ENCODE measurements at regions of chr2 and their contacts with region 1.

Region 1: GRCh38 chr2:237196866-237197618 is 111.4 kb downstream of the COPS8 start:
- DNase-seq: no peak
- H3K4me3 ChIP-seq: no peak overlapping the region
- CTCF ChIP-seq: no peak

Region 2: GRCh38 chr2:236904389-236905280 is 292.4 kb before region 1 on chr2:
- CTCF ChIA-PET with region 1: no interaction called
- POLR2A ChIA-PET with region 1: no interaction called
- DNase-seq: no peak
- H3K4me3 ChIP-seq: no peak overlapping the region
- CTCF ChIP-seq: no peak

Region 3: DNA sequence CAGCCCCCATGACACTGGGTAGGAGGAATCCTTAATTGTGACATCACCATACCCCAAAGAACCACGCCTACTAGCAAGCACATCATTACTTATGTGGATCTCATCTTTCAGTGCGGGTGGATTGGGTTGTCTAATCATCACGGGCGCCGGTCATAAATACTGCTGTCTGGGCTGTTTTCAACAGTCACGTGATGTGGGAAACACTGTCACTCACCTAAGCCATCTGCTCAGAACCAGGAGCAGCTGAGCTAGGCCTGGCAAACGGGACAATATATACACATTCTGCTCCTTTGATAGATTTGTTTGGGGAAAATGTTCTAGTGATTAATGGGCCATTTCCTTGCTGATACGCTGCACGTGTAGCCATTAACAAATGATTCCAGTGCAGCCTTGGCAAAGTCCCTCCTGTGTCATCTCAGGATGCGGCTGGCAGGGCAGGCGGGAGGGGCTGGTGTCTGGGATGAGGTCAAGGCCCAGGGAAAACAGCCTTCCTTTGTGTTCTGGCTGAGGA is 257.3 kb before region 1 on chr2:
- CTCF ChIA-PET with region 1: no interaction called
- POLR2A ChIA-PET with region 1: no interaction called
- DNase-seq: no peak
- H3K4me3 ChIP-seq: no peak overlapping the region
- CTCF ChIP-seq: no peak

Region 4: DNA sequence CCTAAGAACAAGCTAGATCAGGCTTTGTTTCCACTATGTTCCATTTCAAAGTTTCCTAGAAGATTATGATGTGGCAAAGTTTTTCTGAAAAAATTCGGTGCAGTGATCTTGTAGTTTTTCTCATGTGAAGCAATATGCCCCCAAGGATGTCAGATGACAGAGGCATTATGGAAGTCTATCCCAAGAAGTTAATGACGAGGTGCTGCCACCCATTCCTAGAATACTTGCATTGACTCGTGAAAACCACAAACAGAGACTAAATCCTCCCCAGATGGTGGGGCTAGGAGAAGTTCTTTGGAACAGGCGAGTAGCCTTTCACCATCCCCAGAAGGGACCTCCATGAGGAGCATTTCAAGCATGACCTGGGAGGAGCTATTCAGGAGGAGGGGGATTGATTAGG is 151.6 kb before region 1 on chr2:
- CTCF ChIA-PET with region 1: no interaction called
- POLR2A ChIA-PET with region 1: no interaction called
- DNase-seq: no peak
- H3K4me3 ChIP-seq: no peak overlapping the region
- CTCF ChIP-seq: no peak

Region 5: DNA sequence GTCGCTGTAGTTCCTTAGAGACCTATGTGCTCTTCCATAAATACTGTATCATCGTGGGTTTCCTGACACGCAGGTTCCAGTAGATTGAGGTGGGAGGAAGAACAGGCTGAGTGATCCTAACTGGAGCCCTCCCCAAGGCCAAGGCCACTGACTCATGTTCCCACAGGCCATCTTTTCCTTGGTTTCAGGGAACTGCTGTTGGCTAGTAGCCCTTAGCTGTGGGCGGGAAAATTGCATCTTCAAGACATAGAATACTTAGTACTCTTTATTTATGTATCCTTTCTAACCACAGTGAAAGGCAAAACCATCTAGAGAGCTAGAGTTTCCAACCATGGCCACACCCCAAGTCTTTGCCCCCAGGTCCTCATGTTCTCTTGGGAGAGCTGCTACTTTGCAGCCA is 55.5 kb before region 1 on chr2:
- CTCF ChIA-PET with region 1: no interaction called
- POLR2A ChIA-PET with region 1: no interaction called
- DNase-seq: peak; percentile 59
- H3K4me3 ChIP-seq: no peak overlapping the region
- CTCF ChIP-seq: no peak

Region 6: GRCh38 chr2:237181844-237182243 is 15.2 kb before region 1 on chr2:
- CTCF ChIA-PET with region 1: interaction called, 17 read pairs
- POLR2A ChIA-PET with region 1: no interaction called
- DNase-seq: peak; percentile 91
- H3K4me3 ChIP-seq: no peak overlapping the region
- CTCF ChIP-seq: no peak